Caco-2 (cell line): ENCODE measurements at regions of chr12 and their contacts with region 1.

Region 1: GRCh38 chr12:6688999-6689882 is at the start of gene ZNF384:
- DNase-seq: peak; percentile 98 to 100
- H3K4me3 ChIP-seq: peak within 1 kb of the TSS; percentile 96
- H3K4me3 Mint-ChIP-seq: peak within 1 kb of the TSS; percentile 96
- H3K27ac Mint-ChIP-seq: peak within 1 kb of the TSS; percentile 95
- H3K4me1 ChIP-seq: peaks cover 7% of the 10 kb centered on the region; the same call in 1 of the 2 replicates
- H3K4me1 Mint-ChIP-seq: peaks cover 23% of the 10 kb centered on the region
- H3K27me3 ChIP-seq: no peaks in the 10 kb centered on the region
- H3K27me3 Mint-ChIP-seq: peaks cover 9% of the 10 kb centered on the region
- CTCF ChIP-seq: peak in 1 of 2 experiments; percentile 30
- total RNA-seq, gene ZNF384: 119 and 127 TPM in 2 replicates

Region 2: DNA sequence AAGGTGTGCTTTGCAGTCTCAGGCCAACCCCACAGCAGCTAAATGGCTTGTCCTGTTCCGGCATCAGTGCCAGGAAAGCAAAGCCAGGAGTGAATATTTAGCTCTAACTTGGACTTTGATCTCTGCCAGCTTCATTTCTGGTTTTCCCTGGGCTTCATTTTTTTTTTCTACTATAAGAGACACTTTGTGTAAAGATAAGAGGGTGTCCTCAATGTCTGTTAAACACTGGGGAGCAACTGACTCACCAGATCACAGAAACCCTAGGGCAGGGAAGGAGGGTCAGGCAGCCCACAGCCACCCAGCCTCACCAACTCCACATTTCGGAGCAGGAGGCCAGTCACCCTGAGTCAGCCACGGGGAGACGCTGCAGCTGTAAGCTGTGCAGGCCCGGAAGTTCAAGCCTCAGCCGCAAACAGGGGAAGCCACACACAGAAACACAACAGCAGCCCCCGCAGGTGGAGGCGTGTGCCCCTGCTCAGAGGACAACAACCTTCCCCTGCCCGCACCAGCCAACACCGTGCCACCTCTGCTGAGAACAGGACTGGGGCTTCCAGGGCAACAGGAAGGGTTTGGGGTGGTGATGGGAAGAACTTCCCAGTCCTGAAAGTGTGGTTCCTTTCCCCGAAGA is 353.7 kb before region 1 on chr12:
- CTCF ChIA-PET with region 1: interaction called, 3 read pairs
- POLR2A ChIA-PET with region 1: interaction called, 25 read pairs
- intact Hi-C with region 1: no loop called
- DNase-seq: peak; percentile 64 to 66
- H3K4me3 ChIP-seq: peak overlapping the region; percentile 15; the same call in 1 of the 2 replicates
- H3K4me3 Mint-ChIP-seq: no peak overlapping the region
- H3K27ac Mint-ChIP-seq: no peak overlapping the region
- H3K4me1 ChIP-seq: peaks cover 48% of the 10 kb centered on the region
- H3K4me1 Mint-ChIP-seq: peaks cover 7% of the 10 kb centered on the region
- H3K27me3 ChIP-seq: no peaks in the 10 kb centered on the region
- H3K27me3 Mint-ChIP-seq: no peaks in the 10 kb centered on the region
- CTCF ChIP-seq: peak in 1 of 2 experiments; percentile 56

Region 3: GRCh38 chr12:6563448-6564050 is 125.7 kb before region 1 on chr12:
- CTCF ChIA-PET with region 1: interaction called, 4 read pairs
- POLR2A ChIA-PET with region 1: interaction called, 13 read pairs
- intact Hi-C with region 1: loop called (anchors 2 kb)
- DNase-seq: peak; percentile 63 to 80
- H3K4me3 ChIP-seq: no peak overlapping the region
- H3K4me3 Mint-ChIP-seq: no peak overlapping the region
- H3K27ac Mint-ChIP-seq: no peak overlapping the region
- H3K4me1 ChIP-seq: no peaks in the 10 kb centered on the region
- H3K4me1 Mint-ChIP-seq: peaks cover 9% of the 10 kb centered on the region
- H3K27me3 ChIP-seq: no peaks in the 10 kb centered on the region
- H3K27me3 Mint-ChIP-seq: no peaks in the 10 kb centered on the region
- CTCF ChIP-seq: peak; percentile 89 to 96

Region 4: DNA sequence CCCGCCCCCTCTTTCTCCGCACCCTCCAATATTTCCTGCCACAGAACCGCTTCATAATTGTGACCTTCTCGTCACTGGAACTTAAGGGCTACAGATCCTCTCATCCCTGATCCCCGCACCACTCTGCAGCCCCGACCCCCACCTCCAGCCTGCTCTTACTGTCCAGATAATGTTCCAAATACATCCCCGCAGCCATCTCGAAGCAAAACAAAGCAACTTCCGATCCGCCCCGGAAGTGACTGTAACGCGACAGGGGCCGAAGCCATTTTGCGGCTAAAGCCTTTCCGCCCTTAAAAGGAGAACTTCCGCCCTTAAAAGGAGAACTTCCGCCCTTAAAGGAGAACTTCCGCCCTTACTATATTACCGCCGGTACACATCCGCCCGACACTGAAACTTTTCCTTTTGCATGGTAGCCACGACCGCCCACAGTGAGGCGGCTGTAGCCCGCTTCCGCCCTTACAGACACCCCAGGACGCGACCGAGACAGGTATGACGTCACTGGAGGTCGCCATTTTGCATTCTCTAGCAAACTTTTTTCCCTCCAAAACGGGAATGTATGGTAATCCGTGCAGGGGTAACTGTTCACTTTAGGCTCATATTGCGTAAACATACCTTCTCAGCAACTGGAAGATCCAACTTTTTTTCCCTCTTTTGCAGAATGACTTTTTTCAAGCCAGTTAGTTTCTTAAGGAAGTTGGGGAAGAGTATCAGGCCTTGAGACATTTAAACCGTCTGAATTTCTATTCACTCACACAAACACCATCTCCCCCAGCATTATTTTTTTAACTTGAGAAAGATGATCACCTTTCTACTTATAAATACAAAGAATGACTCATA is 26.1 kb before region 1 on chr12 and contains the start of gene ING4:
- CTCF ChIA-PET with region 1: interaction called, 10 read pairs
- POLR2A ChIA-PET with region 1: interaction called, 16 read pairs
- intact Hi-C with region 1: loop called (anchors 1 kb)
- DNase-seq: peak; percentile 99 to 100
- H3K4me3 ChIP-seq: peak within 1 kb of the TSS; percentile 60
- H3K4me3 Mint-ChIP-seq: peak within 1 kb of the TSS; percentile 79
- H3K27ac Mint-ChIP-seq: peak within 1 kb of the TSS; percentile 83
- H3K4me1 ChIP-seq: peaks cover 12% of the 10 kb centered on the region; the same call in 1 of the 2 replicates
- H3K4me1 Mint-ChIP-seq: peaks cover 14% of the 10 kb centered on the region
- H3K27me3 ChIP-seq: no peaks in the 10 kb centered on the region
- H3K27me3 Mint-ChIP-seq: no peaks in the 10 kb centered on the region
- CTCF ChIP-seq: peak in 1 of 2 experiments; percentile 0
- total RNA-seq, gene ING4: 31.6 and 32.8 TPM in 2 replicates

Region 5: GRCh38 chr12:6752921-6753771 is 63.9 kb after region 1 on chr12 and contains the start of gene MLF2:
- CTCF ChIA-PET with region 1: interaction called, 6 read pairs
- POLR2A ChIA-PET with region 1: interaction called, 28 read pairs
- intact Hi-C with region 1: no loop called
- DNase-seq: peak; percentile 99 to 100
- H3K4me3 ChIP-seq: peak within 1 kb of the TSS; percentile 97
- H3K4me3 Mint-ChIP-seq: peak within 1 kb of the TSS; percentile 90
- H3K27ac Mint-ChIP-seq: peak within 1 kb of the TSS; percentile 94
- H3K4me1 ChIP-seq: peaks cover 16% of the 10 kb centered on the region
- H3K4me1 Mint-ChIP-seq: peaks cover 11% of the 10 kb centered on the region
- H3K27me3 ChIP-seq: no peaks in the 10 kb centered on the region
- H3K27me3 Mint-ChIP-seq: no peaks in the 10 kb centered on the region
- CTCF ChIP-seq: peak; percentile 99
- total RNA-seq, gene MLF2: 303 and 309 TPM in 2 replicates

Region 6: DNA sequence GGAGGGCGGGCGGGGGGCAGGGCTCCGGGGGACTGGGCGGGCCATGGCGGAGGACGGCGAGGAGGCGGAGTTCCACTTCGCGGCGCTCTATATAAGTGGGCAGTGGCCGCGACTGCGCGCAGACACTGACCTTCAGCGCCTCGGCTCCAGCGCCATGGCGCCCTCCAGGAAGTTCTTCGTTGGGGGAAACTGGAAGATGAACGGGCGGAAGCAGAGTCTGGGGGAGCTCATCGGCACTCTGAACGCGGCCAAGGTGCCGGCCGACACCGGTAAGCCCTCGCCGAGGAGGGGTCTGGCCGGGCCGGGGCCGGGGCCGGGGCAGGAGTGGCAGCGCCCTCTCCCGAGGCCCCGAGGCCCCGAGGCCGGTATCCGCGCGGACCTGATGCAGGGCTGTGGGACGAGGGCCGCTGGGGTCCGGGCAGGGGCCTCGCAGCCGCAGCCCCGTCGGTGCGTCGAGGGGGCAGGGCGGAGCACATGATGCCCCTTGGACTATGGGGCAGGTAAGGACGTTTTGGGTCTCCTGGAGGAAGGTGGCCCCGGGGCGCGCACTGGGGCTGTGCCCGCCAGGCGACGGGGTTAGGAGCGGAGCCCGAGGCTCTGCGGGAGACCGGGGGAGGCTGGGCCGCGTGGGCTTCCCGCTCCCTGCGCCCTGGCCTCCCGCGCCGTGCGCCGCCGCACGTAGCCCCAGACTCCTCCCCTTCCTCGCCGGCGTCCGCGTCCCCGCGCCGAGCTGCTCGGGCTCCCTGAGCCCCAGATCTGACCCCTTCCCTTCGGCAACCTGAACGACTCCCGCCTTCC is 178.4 kb after region 1 on chr12 and contains the start of gene TPI1:
- CTCF ChIA-PET with region 1: interaction called, 5 read pairs
- POLR2A ChIA-PET with region 1: interaction called, 13 read pairs
- intact Hi-C with region 1: no loop called
- DNase-seq: peak; percentile 88 to 92
- H3K4me3 ChIP-seq: peak within 1 kb of the TSS; percentile 97
- H3K4me3 Mint-ChIP-seq: peak within 1 kb of the TSS; percentile 95
- H3K27ac Mint-ChIP-seq: peak within 1 kb of the TSS; percentile 94
- H3K4me1 ChIP-seq: peaks cover 31% of the 10 kb centered on the region
- H3K4me1 Mint-ChIP-seq: peaks cover 47% of the 10 kb centered on the region
- H3K27me3 ChIP-seq: no peaks in the 10 kb centered on the region
- H3K27me3 Mint-ChIP-seq: no peaks in the 10 kb centered on the region
- CTCF ChIP-seq: no peak
- total RNA-seq, gene TPI1: 1,141 and 1,254 TPM in 2 replicates